ENCODE measurements at regions of chr1 and their contacts with region 1.

Region 1: GRCh38 chr1:67853704-67854103 is 20.4 kb upstream of the GNG12 start:
- DNase-seq: peak; percentile 62
- H3K4me3 ChIP-seq: no peak overlapping the region
- H3K27ac ChIP-seq: no peak overlapping the region
- H3K4me1 ChIP-seq: peaks cover 15% of the 10 kb centered on the region
- H3K27me3 ChIP-seq: no peaks in the 10 kb centered on the region
- CTCF ChIP-seq: peak; percentile 95 to 98

Region 2: GRCh38 chr1:67766141-67766978 is 87.3 kb before region 1 on chr1:
- CTCF ChIA-PET with region 1: interaction called, 7 read pairs
- dilution Hi-C with region 1: no loop called
- in situ Hi-C with region 1: no loop called
- intact Hi-C with region 1: loop called (anchors 1 kb)
- DNase-seq: peak; percentile 70
- H3K4me3 ChIP-seq: no peak overlapping the region
- H3K27ac ChIP-seq: peak overlapping the region; percentile 65
- H3K4me1 ChIP-seq: peaks cover 26% of the 10 kb centered on the region
- H3K27me3 ChIP-seq: no peaks in the 10 kb centered on the region
- CTCF ChIP-seq: peak; percentile 65 to 68

Region 3: GRCh38 chr1:68010090-68010489 is 156.4 kb after region 1 on chr1:
- CTCF ChIA-PET with region 1: interaction called, 6 read pairs
- dilution Hi-C with region 1: no loop called
- in situ Hi-C with region 1: loop called (anchors 5 kb)
- intact Hi-C with region 1: loop called (anchors 1 kb)
- DNase-seq: peak; percentile 17
- H3K4me3 ChIP-seq: no peak overlapping the region
- H3K27ac ChIP-seq: no peak overlapping the region
- H3K4me1 ChIP-seq: no peaks in the 10 kb centered on the region
- H3K27me3 ChIP-seq: no peaks in the 10 kb centered on the region
- CTCF ChIP-seq: peak; percentile 36 to 54

Region 4: DNA sequence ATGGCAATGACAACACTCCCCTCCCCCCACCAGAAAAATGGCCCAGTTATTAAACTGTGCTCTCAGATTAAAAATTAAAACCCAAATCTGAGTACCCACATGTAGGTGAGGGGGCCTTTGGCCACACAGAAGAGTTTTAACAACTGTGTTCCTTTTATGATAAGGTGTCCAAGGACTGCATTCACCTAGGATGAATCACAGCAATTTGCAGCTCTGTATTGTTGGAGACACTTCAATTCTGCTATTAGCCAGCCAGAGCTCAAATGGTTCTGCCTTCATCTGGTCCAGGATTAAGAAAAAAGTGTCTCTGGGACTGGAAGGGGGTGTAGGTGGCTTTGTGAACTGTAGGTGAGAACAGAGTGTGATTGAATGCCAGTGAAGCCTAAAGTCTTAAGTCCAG is 240.0 kb after region 1 on chr1:
- CTCF ChIA-PET with region 1: no interaction called
- dilution Hi-C with region 1: no loop called
- in situ Hi-C with region 1: no loop called
- intact Hi-C with region 1: no loop called
- DNase-seq: peak; percentile 18
- H3K4me3 ChIP-seq: no peak overlapping the region
- H3K27ac ChIP-seq: no peak overlapping the region
- H3K4me1 ChIP-seq: no peaks in the 10 kb centered on the region
- H3K27me3 ChIP-seq: no peaks in the 10 kb centered on the region
- CTCF ChIP-seq: no peak

Region 5: DNA sequence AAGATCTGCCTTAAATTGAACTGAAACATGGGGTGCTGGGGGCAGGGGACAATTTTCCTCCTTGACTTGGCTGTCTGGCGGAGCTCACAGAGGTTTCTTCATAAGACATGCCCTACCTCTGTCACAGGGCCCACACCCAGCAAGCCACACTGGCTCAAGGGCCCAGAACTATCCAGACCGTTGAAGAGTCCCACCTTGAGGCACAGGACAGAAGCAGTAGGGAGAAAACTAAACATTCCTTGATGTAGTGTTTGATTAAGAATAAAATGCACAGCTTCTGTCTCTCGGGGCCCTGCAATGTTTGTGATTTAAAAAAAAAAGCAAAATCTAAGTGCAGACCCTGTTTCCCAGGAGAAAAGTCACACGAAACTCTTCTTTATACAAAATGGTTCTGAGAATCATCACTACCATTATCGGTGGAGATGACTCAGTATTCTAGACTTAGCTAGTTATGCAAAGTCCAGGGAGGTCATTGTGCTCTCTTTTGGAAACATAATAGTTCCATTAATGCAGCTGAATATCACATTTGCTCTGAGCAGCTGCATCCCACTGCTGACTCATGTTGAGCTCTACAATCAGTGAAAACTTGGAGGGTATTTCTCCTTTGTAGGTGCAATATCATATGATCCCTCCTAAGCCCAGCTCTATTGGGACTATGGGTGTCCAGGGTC is 250.3 kb after region 1 on chr1:
- CTCF ChIA-PET with region 1: no interaction called
- dilution Hi-C with region 1: no loop called
- in situ Hi-C with region 1: loop called in 1 of 2 experiments (anchors 10 kb)
- intact Hi-C with region 1: no loop called
- DNase-seq: peak; percentile 41
- H3K4me3 ChIP-seq: no peak overlapping the region
- H3K27ac ChIP-seq: no peak overlapping the region
- H3K4me1 ChIP-seq: peaks cover 6% of the 10 kb centered on the region
- H3K27me3 ChIP-seq: no peaks in the 10 kb centered on the region
- CTCF ChIP-seq: no peak

Region 6: GRCh38 chr1:68232354-68233148 is 378.8 kb after region 1 on chr1 and contains the start of gene WLS:
- CTCF ChIA-PET with region 1: no interaction called
- dilution Hi-C with region 1: no loop called
- in situ Hi-C with region 1: no loop called
- intact Hi-C with region 1: loop called (anchors 5 kb)
- DNase-seq: peak; percentile 70
- H3K4me3 ChIP-seq: peak within 1 kb of the TSS; percentile 78 to 100 (median 96)
- H3K27ac ChIP-seq: peak within 1 kb of the TSS; percentile 82
- H3K4me1 ChIP-seq: peaks cover 22% of the 10 kb centered on the region
- H3K27me3 ChIP-seq: no peaks in the 10 kb centered on the region
- CTCF ChIP-seq: no peak
- total RNA-seq, gene WLS: 93.9 to 113 TPM

Region 7: GRCh38 chr1:68442822-68443556 is 589.3 kb after region 1 on chr1:
- CTCF ChIA-PET with region 1: no interaction called
- dilution Hi-C with region 1: no loop called
- in situ Hi-C with region 1: no loop called
- intact Hi-C with region 1: loop called (anchors 10 kb)
- DNase-seq: peak; percentile 81
- H3K4me3 ChIP-seq: no peak overlapping the region
- H3K27ac ChIP-seq: no peak overlapping the region
- H3K4me1 ChIP-seq: peaks cover 8% of the 10 kb centered on the region
- H3K27me3 ChIP-seq: no peaks in the 10 kb centered on the region
- CTCF ChIP-seq: peak; percentile 73 to 76